Tibial artery (tissue), 4 donors: ENCODE measurements at regions of chr15 and their contacts with region 1.

Region 1: DNA sequence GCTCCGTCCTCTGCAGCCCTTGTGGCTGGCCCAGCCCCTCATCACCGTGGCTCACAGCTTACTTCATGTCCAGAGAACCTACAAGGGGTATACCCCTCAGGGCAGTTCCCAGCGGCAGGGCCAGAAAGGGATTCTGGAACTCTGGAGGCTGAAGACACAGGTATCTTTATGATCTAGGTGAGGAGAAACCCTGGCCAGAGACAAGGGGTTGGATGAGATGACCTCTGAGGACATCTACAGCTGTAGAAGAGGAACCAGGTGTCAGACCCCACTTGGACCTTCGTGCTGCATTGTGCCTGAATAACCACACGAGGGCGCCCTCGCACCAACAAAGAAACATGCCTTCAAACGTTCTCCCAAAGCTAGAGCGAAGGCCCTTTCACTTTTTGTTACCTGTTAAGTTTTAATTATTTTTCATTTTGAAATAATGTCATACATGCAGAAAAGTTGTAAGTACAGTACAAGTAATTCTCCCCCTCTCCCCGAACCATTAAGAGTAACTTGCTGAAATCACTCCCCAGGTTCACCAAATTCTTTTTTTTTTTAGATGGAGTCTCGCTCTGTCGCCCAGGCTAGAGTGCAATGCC is 118.7 kb upstream of the SMAD3 start:
- DNase-seq: peak; percentile 64 to 81
- H3K4me3 ChIP-seq: no peak overlapping the region
- H3K27ac ChIP-seq: no peak overlapping the region
- H3K4me1 ChIP-seq: peaks cover 0 to 4% (median 0%) of the 10 kb centered on the region in 4 donors
- H3K27me3 ChIP-seq: no peaks in the 10 kb centered on the region
- CTCF ChIP-seq: peak; percentile 88 to 96

Region 2: GRCh38 chr15:67303490-67304363 is 357.1 kb after region 1 on chr15:
- intact Hi-C with region 1: loop called (anchors 5 kb)
- DNase-seq: no peak
- H3K4me3 ChIP-seq: no peak overlapping the region
- H3K27ac ChIP-seq: no peak overlapping the region
- H3K4me1 ChIP-seq: no peaks in the 10 kb centered on the region
- H3K27me3 ChIP-seq: no peaks in the 10 kb centered on the region
- CTCF ChIP-seq: peak; percentile 41 to 58

Region 3: DNA sequence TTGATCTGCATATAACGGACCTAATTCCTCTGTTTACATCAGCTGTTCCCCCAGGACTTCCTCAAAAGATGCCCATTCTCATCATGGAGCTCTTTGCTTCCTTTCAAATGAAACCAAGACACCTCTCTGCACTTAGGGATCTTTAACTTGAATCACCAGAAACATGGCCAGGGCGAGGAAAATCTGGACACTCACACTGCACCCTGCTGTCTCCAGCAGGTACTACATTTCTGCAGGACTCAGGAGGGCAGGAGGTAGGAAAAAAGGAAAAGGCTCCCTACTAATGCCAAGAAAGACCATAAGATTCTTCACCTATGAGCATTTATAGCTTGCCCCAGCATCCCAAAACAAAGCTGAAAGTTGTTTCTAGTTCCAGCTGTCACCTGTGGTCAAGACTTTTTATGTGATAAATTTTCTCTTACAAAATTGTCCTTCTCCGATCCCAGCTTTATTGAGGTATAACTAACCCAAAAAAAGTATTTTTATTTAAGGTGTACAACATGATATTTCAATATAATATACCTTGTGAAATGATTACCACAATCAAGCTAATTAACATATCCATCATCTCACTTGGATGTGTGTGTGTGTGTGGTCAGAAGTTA is 486.9 kb after region 1 on chr15:
- intact Hi-C with region 1: loop called (anchors 2 kb)
- DNase-seq: peak in 1 of 2 donors; percentile 43
- H3K4me3 ChIP-seq: no peak overlapping the region
- H3K27ac ChIP-seq: no peak overlapping the region
- H3K4me1 ChIP-seq: no peaks in the 10 kb centered on the region
- H3K27me3 ChIP-seq: no peaks in the 10 kb centered on the region
- CTCF ChIP-seq: peak; percentile 73 to 74